Activated B cell treated with CpG ODN at 0.5 μM for 24 hours (primary cell): ENCODE measurements at regions of chr22 and their contacts with region 1.

Region 1: GRCh38 chr22:40346178-40347118 is at the start of gene ADSL:
- DNase-seq: peak; percentile 85
- ATAC-seq: peak; percentile 91
- H3K4me3 Mint-ChIP-seq: peak within 1 kb of the TSS; percentile 98
- H3K27ac Mint-ChIP-seq: peak within 1 kb of the TSS; percentile 98
- H3K4me1 Mint-ChIP-seq: peaks cover 34% of the 10 kb centered on the region
- H3K27me3 Mint-ChIP-seq: no peaks in the 10 kb centered on the region
- CTCF ChIP-seq: no peak
- total RNA-seq, gene ADSL: 102 and 109 TPM in 2 replicates

Region 2: GRCh38 chr22:39395936-39396796 is 950.3 kb before region 1 on chr22:
- CTCF ChIA-PET with region 1: no interaction called
- POLR2A ChIA-PET with region 1: no interaction called
- intact Hi-C with region 1: loop called (anchors 1 kb)
- DNase-seq: no peak
- ATAC-seq: no peak
- H3K4me3 Mint-ChIP-seq: no peak overlapping the region
- H3K27ac Mint-ChIP-seq: no peak overlapping the region
- H3K4me1 Mint-ChIP-seq: peaks cover 10% of the 10 kb centered on the region
- H3K27me3 Mint-ChIP-seq: no peaks in the 10 kb centered on the region
- CTCF ChIP-seq: no peak

Region 3: GRCh38 chr22:40116496-40117200 is 229.8 kb before region 1 on chr22:
- CTCF ChIA-PET with region 1: no interaction called
- POLR2A ChIA-PET with region 1: no interaction called
- intact Hi-C with region 1: no loop called
- DNase-seq: no peak
- ATAC-seq: no peak
- H3K4me3 Mint-ChIP-seq: no peak overlapping the region
- H3K27ac Mint-ChIP-seq: peak overlapping the region; percentile 25
- H3K4me1 Mint-ChIP-seq: peaks cover 57% of the 10 kb centered on the region
- H3K27me3 Mint-ChIP-seq: no peaks in the 10 kb centered on the region
- CTCF ChIP-seq: no peak

Region 4: GRCh38 chr22:40210818-40211217 is 135.6 kb before region 1 on chr22:
- CTCF ChIA-PET with region 1: interaction called, 3 read pairs
- POLR2A ChIA-PET with region 1: no interaction called
- intact Hi-C with region 1: loop called (anchors 5 kb)
- DNase-seq: no peak
- ATAC-seq: peak; percentile 95
- H3K4me3 Mint-ChIP-seq: peak overlapping the region; percentile 33
- H3K27ac Mint-ChIP-seq: peak overlapping the region; percentile 76
- H3K4me1 Mint-ChIP-seq: peaks cover 76% of the 10 kb centered on the region
- H3K27me3 Mint-ChIP-seq: no peaks in the 10 kb centered on the region
- CTCF ChIP-seq: no peak

Region 5: GRCh38 chr22:40334899-40335298 is 11.5 kb before region 1 on chr22:
- CTCF ChIA-PET with region 1: interaction called, 11 read pairs
- POLR2A ChIA-PET with region 1: interaction called, 55 read pairs
- intact Hi-C with region 1: loop called (anchors 2 kb)
- DNase-seq: no peak
- ATAC-seq: no peak
- H3K4me3 Mint-ChIP-seq: no peak overlapping the region
- H3K27ac Mint-ChIP-seq: peak overlapping the region; percentile 84
- H3K4me1 Mint-ChIP-seq: peaks cover 44% of the 10 kb centered on the region
- H3K27me3 Mint-ChIP-seq: no peaks in the 10 kb centered on the region
- CTCF ChIP-seq: no peak

Region 6: DNA sequence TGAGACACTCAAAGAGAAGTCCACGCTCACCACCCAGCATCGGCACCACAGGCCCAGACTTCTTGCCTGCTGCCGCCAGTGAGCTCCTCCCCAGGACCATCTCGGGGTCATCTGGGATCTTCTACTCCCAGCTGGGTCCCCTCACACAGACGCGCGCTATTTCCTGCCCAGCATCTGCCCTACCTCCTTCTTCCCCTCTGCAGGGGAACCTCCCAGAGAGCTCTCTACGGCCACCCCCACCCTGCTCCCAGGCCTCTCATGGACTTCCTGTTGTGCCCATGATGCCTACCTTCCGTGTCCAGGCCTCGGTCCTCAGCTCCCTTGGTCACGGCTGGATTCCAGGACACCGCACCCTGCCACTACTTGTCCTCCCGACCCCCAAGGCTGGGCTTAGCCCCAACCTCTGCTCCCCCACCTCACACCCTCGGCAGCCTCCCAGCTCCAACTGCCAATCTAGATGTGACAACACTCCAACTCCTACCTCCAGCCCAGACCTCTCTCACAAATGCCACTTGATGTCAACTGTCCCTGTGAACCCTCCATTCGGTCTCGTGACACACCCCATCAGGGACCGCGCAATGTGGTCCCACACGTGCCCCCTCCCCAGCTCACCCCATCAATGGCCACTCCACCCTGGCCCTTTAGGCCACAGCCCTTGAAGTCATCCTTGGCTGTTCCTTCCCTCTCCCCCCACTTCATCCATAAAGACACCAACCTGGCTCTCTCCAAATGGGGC is 69.3 kb after region 1 on chr22:
- CTCF ChIA-PET with region 1: no interaction called
- POLR2A ChIA-PET with region 1: interaction called, 22 read pairs
- intact Hi-C with region 1: loop called (anchors 1 kb)
- DNase-seq: no peak
- ATAC-seq: peak; percentile 48
- H3K4me3 Mint-ChIP-seq: peak overlapping the region; percentile 75
- H3K27ac Mint-ChIP-seq: peak overlapping the region; percentile 91
- H3K4me1 Mint-ChIP-seq: peaks cover 80% of the 10 kb centered on the region
- H3K27me3 Mint-ChIP-seq: no peaks in the 10 kb centered on the region
- CTCF ChIP-seq: no peak

Region 7: DNA sequence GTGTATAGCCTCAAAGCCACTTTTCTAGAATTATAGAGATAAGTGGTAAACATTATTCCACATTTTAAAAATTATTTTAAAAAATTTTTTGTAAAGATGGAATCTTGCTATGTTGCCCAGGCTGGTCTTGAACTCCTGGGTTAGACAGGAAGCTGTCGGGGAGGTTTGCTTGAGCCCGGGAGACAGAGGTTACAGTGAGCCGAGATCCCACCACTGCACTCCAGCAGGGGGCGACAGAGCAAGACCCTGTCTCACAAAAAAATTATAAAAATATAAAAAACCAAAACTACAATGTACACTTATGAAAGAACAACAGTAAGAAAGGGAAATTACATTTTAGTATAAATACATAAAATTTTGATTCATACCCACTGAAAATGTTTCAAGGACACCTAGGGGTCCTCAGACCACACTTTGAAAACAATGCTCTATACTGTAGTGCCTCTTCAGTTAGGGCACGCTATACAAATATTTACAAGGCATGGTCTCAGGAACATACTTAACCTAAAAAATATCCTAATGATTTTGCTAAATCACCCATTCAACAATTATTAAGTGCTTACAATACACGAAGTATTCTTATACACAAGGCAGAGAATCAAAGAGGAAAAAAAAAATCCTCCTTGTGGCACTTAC is 178.9 kb after region 1 on chr22:
- CTCF ChIA-PET with region 1: no interaction called
- POLR2A ChIA-PET with region 1: interaction called, 10 read pairs
- intact Hi-C with region 1: no loop called
- DNase-seq: peak; percentile 50
- ATAC-seq: peak; percentile 63
- H3K4me3 Mint-ChIP-seq: no peak overlapping the region
- H3K27ac Mint-ChIP-seq: no peak overlapping the region
- H3K4me1 Mint-ChIP-seq: peaks cover 48% of the 10 kb centered on the region
- H3K27me3 Mint-ChIP-seq: no peaks in the 10 kb centered on the region
- CTCF ChIP-seq: peak; percentile 39

Region 8: DNA sequence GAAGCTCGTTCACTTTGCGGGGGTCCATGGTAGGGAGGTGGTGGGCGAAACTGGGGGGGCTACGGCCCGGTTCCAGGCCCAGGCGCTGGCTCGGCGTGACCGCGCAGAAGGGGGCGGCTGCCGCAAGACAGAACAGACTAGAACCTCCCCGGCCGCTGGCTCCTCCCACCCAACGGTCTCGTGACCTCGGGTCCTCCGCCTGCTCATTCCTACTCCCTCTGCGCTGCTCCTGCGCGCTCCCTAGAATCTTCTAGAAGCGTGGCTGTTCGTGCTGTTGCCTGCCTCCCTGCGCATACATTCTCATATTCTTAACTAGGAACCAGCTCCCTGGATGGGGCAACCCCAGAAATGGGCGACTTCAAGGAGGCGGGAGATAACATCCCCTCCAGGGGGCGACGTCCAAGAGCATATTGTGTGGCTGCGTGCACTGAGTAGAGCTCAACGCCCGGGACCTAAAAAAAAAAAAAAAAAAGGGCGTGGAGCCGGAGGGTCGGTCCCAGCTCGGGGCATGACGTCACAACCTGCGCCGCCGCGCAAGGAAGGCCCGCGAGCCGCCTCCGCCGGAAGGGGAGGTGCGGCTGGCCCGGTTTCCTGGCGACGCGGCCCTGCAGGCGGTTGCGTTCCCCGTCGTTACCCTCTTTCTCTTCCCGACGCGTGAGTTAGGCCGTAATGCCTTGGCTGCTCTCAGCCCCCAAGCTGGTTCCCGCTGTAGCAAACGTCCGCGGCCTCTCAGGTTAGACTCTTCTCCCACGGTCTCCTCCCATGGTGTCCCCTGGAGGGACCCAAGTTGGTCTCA is 510.3 kb after region 1 on chr22 and contains the starts of genes ST13 and XPNPEP3:
- CTCF ChIA-PET with region 1: no interaction called
- POLR2A ChIA-PET with region 1: no interaction called
- intact Hi-C with region 1: loop called (anchors 1 kb)
- DNase-seq: peak; percentile 96
- ATAC-seq: peak; percentile 90
- H3K4me3 Mint-ChIP-seq: peak within 1 kb of the TSS; percentile 98
- H3K27ac Mint-ChIP-seq: peak within 1 kb of the TSS; percentile 100
- H3K4me1 Mint-ChIP-seq: peaks cover 47% of the 10 kb centered on the region
- H3K27me3 Mint-ChIP-seq: no peaks in the 10 kb centered on the region
- CTCF ChIP-seq: no peak
- total RNA-seq, gene ST13: 183 and 221 TPM in 2 replicates
- total RNA-seq, gene XPNPEP3: 20.3 and 20.8 TPM in 2 replicates